WTC11 (cell line): ENCODE measurements at regions of chr12 and their contacts with region 1.

Region 1: DNA sequence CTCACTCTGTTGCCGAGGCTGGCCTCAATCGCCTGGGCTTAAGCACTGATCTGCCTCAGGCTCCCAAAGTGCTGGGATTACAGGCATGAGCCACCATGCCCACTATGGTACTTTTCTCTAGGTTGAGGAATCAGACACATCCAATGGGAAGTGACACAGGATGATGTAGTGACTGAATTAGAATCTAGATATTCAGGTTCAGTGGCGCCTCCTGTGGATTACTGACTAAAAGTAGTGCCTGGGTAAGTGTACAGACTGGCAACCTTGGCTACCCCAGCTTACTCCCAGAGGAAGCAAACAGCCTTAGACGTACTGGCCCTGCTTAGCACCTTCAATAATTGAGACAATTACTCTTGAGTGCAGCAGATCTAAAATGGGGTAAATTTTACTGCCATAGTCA is 22.8 kb downstream of the GALNT8 start:
- DNase-seq: peak; percentile 29
- ATAC-seq: peak; percentile 88
- H3K4me3 Mint-ChIP-seq: no peak overlapping the region
- H3K27ac Mint-ChIP-seq: no peak overlapping the region; the same call in 1 of the 2 replicates
- H3K4me1 Mint-ChIP-seq: peaks cover 6% of the 10 kb centered on the region
- H3K27me3 Mint-ChIP-seq: no peaks in the 10 kb centered on the region
- CTCF ChIP-seq: no peak

Region 2: DNA sequence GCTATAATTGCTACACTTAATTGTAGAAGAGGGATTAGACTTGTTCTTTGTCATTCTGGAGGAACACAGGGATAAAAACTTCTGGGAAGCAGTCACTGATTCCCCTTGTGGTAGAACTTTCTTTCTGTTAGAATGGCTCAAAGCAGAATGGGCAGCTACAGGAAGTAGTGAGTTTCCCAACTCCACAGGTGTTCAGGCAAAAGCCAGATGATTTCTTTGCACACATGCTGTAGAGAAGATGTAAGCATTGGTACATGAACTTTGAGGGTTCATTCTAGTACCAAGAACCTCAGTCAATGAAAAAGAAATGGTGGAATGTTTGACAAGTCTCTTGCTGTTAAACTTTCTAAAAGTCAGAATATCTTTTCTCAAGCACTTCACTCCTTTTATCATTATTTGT is 89.8 kb before region 1 on chr12:
- CTCF ChIA-PET with region 1: no interaction called
- POLR2A ChIA-PET with region 1: no interaction called
- DNase-seq: no peak
- ATAC-seq: no peak; the same call in 1 of the 2 replicates
- H3K4me3 Mint-ChIP-seq: no peak overlapping the region
- H3K27ac Mint-ChIP-seq: peak overlapping the region; percentile 28; the same call in 1 of the 2 replicates
- H3K4me1 Mint-ChIP-seq: peaks cover 27% of the 10 kb centered on the region
- H3K27me3 Mint-ChIP-seq: no peaks in the 10 kb centered on the region
- CTCF ChIP-seq: no peak

Region 3: GRCh38 chr12:4763549-4763948 is 20.5 kb after region 1 on chr12:
- CTCF ChIA-PET with region 1: interaction called, 10 read pairs
- POLR2A ChIA-PET with region 1: no interaction called
- DNase-seq: peak; percentile 94
- ATAC-seq: peak; percentile 99
- H3K4me3 Mint-ChIP-seq: no peak overlapping the region
- H3K27ac Mint-ChIP-seq: peak overlapping the region; percentile 83
- H3K4me1 Mint-ChIP-seq: peaks cover 14% of the 10 kb centered on the region
- H3K27me3 Mint-ChIP-seq: no peaks in the 10 kb centered on the region
- CTCF ChIP-seq: peak; percentile 20; the same call in 1 of the 2 replicates